CD4-positive, alpha-beta memory T cell (primary cell): ENCODE measurements at regions of chr2 and their contacts with region 1.

Region 1: DNA sequence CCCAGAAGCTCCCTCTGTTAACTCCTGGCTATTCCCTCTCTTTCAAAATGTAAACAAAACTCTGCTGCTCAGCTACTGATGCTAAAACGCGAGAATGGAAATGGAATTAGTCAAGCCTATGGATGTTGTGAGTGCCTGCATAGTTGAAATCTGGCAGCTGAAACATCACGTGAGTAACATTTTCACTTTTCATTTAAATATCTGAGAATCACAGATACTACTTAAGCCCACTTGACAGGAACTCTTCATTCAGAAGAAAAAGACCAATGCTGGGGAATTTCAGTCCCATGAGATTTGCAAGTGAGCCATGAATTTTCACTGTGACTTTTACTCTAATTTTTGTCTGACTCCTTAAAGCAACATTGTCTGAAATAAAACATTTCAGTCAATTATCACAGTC is 215.3 kb upstream of the SESTD1 start:
- DNase-seq: no peak
- H3K4me3 ChIP-seq: no peak overlapping the region
- H3K4me3 Mint-ChIP-seq: no peak overlapping the region
- H3K27ac ChIP-seq: no peak overlapping the region
- H3K27ac Mint-ChIP-seq: no peak overlapping the region
- H3K4me1 ChIP-seq: no peaks in the 10 kb centered on the region
- H3K4me1 Mint-ChIP-seq: no peaks in the 10 kb centered on the region
- H3K27me3 ChIP-seq: no peaks in the 10 kb centered on the region
- H3K27me3 Mint-ChIP-seq: peaks cover 0 to 2% of the 10 kb centered on the region in 2 donors

Region 2: DNA sequence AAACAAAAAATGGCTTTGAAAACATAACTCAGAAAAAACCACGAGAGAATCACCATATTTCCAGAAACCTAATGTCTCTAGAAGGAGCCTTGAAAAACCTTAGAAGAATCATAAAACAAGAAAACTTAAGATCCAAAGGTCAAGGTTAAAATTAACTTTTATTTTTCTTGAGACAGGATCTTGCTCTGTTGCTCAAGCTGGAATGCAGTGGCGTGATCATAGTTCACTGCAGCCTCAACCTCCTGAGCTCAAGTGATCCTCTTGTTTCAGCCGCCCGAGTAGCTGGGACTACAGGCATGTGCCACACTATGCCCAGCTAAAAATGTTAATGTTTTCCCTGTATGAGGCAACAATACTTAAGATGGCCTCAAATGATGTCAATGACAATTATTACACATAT is 38.9 kb after region 1 on chr2:
- CTCF ChIA-PET with region 1: no interaction called
- POLR2A ChIA-PET with region 1: no interaction called
- intact Hi-C with region 1: loop called (anchors 1 kb)
- DNase-seq: no peak
- H3K4me3 ChIP-seq: no peak overlapping the region
- H3K4me3 Mint-ChIP-seq: no peak overlapping the region
- H3K27ac ChIP-seq: no peak overlapping the region
- H3K27ac Mint-ChIP-seq: no peak overlapping the region
- H3K4me1 ChIP-seq: no peaks in the 10 kb centered on the region
- H3K4me1 Mint-ChIP-seq: no peaks in the 10 kb centered on the region
- H3K27me3 ChIP-seq: no peaks in the 10 kb centered on the region
- H3K27me3 Mint-ChIP-seq: peaks cover 0 to 2% of the 10 kb centered on the region in 2 donors